ENCODE measurements at regions of chr1 and their contacts with region 1.

Region 1: GRCh38 chr1:215517441-215517891 is 49.6 kb upstream of the KCTD3 start:
- DNase-seq: no peak
- ATAC-seq: peak; percentile 50
- H3K4me3 ChIP-seq: no peak overlapping the region
- H3K27ac ChIP-seq: no peak overlapping the region
- H3K4me1 ChIP-seq: no peaks in the 10 kb centered on the region
- H3K27me3 ChIP-seq: no peaks in the 10 kb centered on the region
- CTCF ChIP-seq: no peak
- EP300 ChIP-seq: no peak
- POLR2A ChIP-seq: no peak
- RAD21 ChIP-seq: no peak

Region 2: GRCh38 chr1:214816603-214817002 is 700.9 kb before region 1 on chr1:
- CTCF ChIA-PET with region 1: no interaction called
- POLR2A ChIA-PET with region 1: no interaction called
- RAD21 ChIA-PET with region 1: no interaction called
- SMC1A ChIA-PET with region 1: no interaction called
- in situ Hi-C with region 1: loop called (anchors 25 kb)
- intact Hi-C with region 1: loop called (anchors 5 kb)
- DNase-seq: no peak
- ATAC-seq: no peak
- H3K4me3 ChIP-seq: no peak overlapping the region
- H3K27ac ChIP-seq: no peak overlapping the region
- H3K4me1 ChIP-seq: no peaks in the 10 kb centered on the region
- H3K27me3 ChIP-seq: no peaks in the 10 kb centered on the region
- CTCF ChIP-seq: no peak
- EP300 ChIP-seq: no peak
- POLR2A ChIP-seq: no peak
- RAD21 ChIP-seq: no peak

Region 3: DNA sequence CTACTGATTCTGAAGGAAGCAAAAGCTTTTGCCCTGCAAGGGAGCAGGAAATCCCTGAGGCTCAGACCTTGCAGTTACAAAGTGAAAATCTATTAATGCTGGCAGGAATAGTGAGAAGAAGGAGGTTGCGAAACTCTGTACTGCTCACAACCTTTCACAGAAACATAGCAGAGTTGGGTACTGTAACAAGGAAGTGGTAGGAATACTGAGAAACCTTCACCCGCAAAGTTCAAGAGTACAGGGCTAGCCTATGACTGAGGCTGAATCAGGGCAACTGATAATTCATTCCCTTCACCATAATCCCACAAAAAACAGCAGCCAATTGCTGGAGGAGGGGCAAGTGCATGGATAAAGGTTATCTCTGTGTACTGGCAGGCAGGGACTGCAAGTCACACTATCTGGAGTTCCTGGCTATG is 25.7 kb after region 1 on chr1:
- CTCF ChIA-PET with region 1: no interaction called
- POLR2A ChIA-PET with region 1: no interaction called
- RAD21 ChIA-PET with region 1: no interaction called
- SMC1A ChIA-PET with region 1: no interaction called
- in situ Hi-C with region 1: no loop called
- intact Hi-C with region 1: no loop called
- DNase-seq: peak; percentile 23
- ATAC-seq: peak; percentile 71
- H3K4me3 ChIP-seq: no peak overlapping the region; the same call in 1 of the 2 replicates
- H3K27ac ChIP-seq: no peak overlapping the region
- H3K4me1 ChIP-seq: peaks cover 4% of the 10 kb centered on the region; the same call in 1 of the 2 replicates
- H3K27me3 ChIP-seq: no peaks in the 10 kb centered on the region
- CTCF ChIP-seq: no peak
- EP300 ChIP-seq: no peak
- POLR2A ChIP-seq: no peak
- RAD21 ChIP-seq: no peak